Right ventricle myocardium superior (tissue), 1 donor: ENCODE measurements at regions of chrX and their contacts with region 1.

Region 1: DNA sequence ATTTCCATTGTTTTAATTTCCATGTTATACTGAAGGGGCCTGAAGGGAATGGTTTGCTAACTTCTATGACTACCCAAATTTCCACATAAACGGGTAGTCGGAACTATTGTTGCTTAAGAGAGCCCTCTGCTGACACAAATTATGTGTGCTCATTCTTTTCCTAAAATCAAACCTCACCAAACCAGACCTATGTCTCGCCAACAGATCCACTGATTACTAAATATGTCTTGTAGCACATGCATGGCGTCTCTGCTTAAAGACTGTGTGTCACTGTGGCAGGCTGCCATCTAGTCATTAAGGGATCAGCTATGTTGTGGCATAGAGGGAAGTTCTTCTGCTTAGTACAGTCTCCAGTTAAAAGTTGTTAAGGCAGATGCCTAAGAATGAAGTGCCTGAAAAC is 25.1 kb downstream of the PIR start:
- DNase-seq: no peak
- ATAC-seq: peak; percentile 69

Region 2: GRCh38 chrX:15299941-15300851 is 167.8 kb before region 1 on chrX:
- intact Hi-C with region 1: loop called (anchors 10 kb)
- DNase-seq: no peak
- ATAC-seq: no peak

Region 3: DNA sequence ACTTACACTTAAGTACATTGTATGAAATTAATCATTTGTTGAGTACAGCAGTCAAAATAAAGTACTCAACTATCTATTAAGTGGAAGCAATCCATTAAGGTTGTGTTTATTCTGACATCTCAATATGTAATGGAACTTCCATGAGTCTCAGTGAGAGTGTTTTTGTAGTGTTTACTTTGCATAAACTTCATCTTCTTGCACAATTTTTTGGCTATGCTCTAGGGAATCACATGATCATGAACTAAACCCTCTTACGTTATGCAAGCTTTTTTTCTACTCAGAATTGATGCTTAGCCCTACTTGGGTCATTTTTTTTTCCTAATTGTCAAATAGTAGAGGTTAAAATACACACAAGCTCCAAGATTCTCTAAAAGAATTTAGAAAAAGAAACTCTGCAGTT is 111.6 kb before region 1 on chrX:
- intact Hi-C with region 1: loop called (anchors 10 kb)
- DNase-seq: no peak
- ATAC-seq: peak; percentile 73